ENCODE measurements at regions of chr4 and their contacts with region 1.

Region 1: DNA sequence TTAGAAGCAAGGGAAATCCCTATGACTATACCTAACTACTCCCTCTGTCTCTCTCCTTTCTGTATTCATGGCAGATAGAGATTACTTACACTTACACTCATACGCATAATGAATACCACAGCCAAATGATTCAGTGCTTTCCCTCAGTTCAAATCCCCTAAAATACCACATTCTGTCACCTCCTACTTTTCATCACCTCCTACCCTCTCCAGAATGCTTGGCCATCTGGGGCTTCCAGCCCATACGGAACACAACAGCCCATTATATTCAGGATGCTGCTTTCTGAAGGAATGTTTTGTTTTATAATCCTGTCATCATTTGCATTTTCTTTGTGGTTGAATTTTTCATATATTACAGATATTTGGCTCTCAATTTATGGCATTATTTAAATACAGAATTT is 361.6 kb downstream of the GRIA2 start:
- DNase-seq: no peak
- H3K4me3 ChIP-seq: no peak overlapping the region
- H3K4me3 Mint-ChIP-seq: no peak overlapping the region
- H3K27ac ChIP-seq: no peak overlapping the region
- H3K27ac Mint-ChIP-seq: peak overlapping the region in 1 of 7 donors; percentile 41
- H3K4me1 ChIP-seq: no peaks in the 10 kb centered on the region
- H3K4me1 Mint-ChIP-seq: no peaks in the 10 kb centered on the region
- H3K27me3 ChIP-seq: no peaks in the 10 kb centered on the region
- H3K27me3 Mint-ChIP-seq: no peaks in the 10 kb centered on the region

Region 2: DNA sequence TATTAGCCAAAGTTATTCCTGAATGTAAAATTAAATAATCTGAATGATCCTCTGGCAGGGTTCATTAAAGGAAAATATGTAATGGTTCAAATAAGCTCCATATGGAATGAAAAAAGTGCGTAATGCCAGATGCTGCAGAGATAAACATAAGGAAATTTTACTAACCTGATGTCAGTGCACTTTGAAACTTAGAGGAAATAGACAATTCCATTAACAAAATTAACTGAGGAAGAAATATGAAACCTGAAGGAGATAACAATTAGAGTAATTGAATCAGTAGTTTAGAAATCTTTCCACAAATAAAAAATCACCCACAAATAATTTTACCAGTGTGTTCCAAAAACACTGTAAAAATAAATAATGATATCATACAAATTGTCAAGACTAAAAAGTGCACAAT is 25.9 kb after region 1 on chr4:
- CTCF ChIA-PET with region 1: no interaction called
- POLR2A ChIA-PET with region 1: no interaction called
- intact Hi-C with region 1: loop called (anchors 2 kb)
- DNase-seq: no peak
- H3K4me3 ChIP-seq: no peak overlapping the region
- H3K4me3 Mint-ChIP-seq: no peak overlapping the region
- H3K27ac ChIP-seq: no peak overlapping the region
- H3K27ac Mint-ChIP-seq: no peak overlapping the region
- H3K4me1 ChIP-seq: no peaks in the 10 kb centered on the region
- H3K4me1 Mint-ChIP-seq: no peaks in the 10 kb centered on the region
- H3K27me3 ChIP-seq: no peaks in the 10 kb centered on the region
- H3K27me3 Mint-ChIP-seq: no peaks in the 10 kb centered on the region

Region 3: GRCh38 chr4:157792716-157793115 is 210.6 kb after region 1 on chr4:
- CTCF ChIA-PET with region 1: no interaction called
- POLR2A ChIA-PET with region 1: no interaction called
- intact Hi-C with region 1: no loop called
- DNase-seq: no peak
- H3K4me3 ChIP-seq: no peak overlapping the region
- H3K4me3 Mint-ChIP-seq: no peak overlapping the region
- H3K27ac ChIP-seq: no peak overlapping the region
- H3K27ac Mint-ChIP-seq: no peak overlapping the region
- H3K4me1 ChIP-seq: no peaks in the 10 kb centered on the region
- H3K4me1 Mint-ChIP-seq: no peaks in the 10 kb centered on the region
- H3K27me3 ChIP-seq: no peaks in the 10 kb centered on the region
- H3K27me3 Mint-ChIP-seq: no peaks in the 10 kb centered on the region

Region 4: GRCh38 chr4:157854819-157855218 is 272.7 kb after region 1 on chr4:
- CTCF ChIA-PET with region 1: no interaction called
- POLR2A ChIA-PET with region 1: no interaction called
- intact Hi-C with region 1: no loop called
- DNase-seq: no peak
- H3K4me3 ChIP-seq: no peak overlapping the region
- H3K4me3 Mint-ChIP-seq: no peak overlapping the region
- H3K27ac ChIP-seq: no peak overlapping the region
- H3K27ac Mint-ChIP-seq: no peak overlapping the region
- H3K4me1 ChIP-seq: no peaks in the 10 kb centered on the region
- H3K4me1 Mint-ChIP-seq: no peaks in the 10 kb centered on the region
- H3K27me3 ChIP-seq: no peaks in the 10 kb centered on the region
- H3K27me3 Mint-ChIP-seq: no peaks in the 10 kb centered on the region

Measured in CD4-positive, alpha-beta memory T cell (primary cell).